ENCODE measurements at regions of chr7 and their contacts with region 1.

Region 1: GRCh38 chr7:93902777-93903423 is 3.5 kb upstream of the GNGT1 start:
- DNase-seq: peak; percentile 51
- H3K4me3 ChIP-seq: no peak overlapping the region
- H3K27ac ChIP-seq: no peak overlapping the region
- H3K4me1 ChIP-seq: no peaks in the 10 kb centered on the region
- H3K27me3 ChIP-seq: no peaks in the 10 kb centered on the region

Region 2: GRCh38 chr7:94087664-94088352 is 184.9 kb after region 1 on chr7:
- in situ Hi-C with region 1: loop called (anchors 10 kb)
- DNase-seq: peak; percentile 83
- H3K4me3 ChIP-seq: peak overlapping the region; percentile 72
- H3K27ac ChIP-seq: no peak overlapping the region
- H3K4me1 ChIP-seq: peaks cover 12% of the 10 kb centered on the region
- H3K27me3 ChIP-seq: no peaks in the 10 kb centered on the region

Region 3: DNA sequence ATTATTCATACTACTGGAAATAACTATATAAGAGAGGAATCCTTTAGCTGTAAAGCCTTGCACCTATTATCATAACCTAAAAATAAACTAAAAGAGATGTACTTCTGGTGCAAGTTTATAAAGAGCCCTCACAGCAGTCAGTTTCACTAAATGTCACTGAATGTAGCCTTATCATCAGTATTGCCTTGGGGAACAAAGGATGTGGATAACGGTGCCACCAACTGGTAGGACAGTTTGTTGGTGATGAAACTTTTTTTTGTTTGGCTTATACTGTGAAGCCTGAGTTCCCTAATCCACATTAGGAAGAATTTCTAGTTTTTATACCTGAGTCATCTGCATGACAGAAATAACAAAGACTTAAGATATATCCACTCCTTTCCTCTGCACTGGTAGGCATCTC is 373.9 kb after region 1 on chr7:
- in situ Hi-C with region 1: loop called (anchors 10 kb)
- DNase-seq: peak; percentile 65
- H3K4me3 ChIP-seq: no peak overlapping the region
- H3K27ac ChIP-seq: no peak overlapping the region
- H3K4me1 ChIP-seq: peaks cover 8% of the 10 kb centered on the region
- H3K27me3 ChIP-seq: no peaks in the 10 kb centered on the region

Region 4: GRCh38 chr7:94540428-94540827 is 637.5 kb after region 1 on chr7:
- in situ Hi-C with region 1: no loop called
- DNase-seq: no peak
- H3K4me3 ChIP-seq: no peak overlapping the region
- H3K27ac ChIP-seq: no peak overlapping the region
- H3K4me1 ChIP-seq: no peaks in the 10 kb centered on the region
- H3K27me3 ChIP-seq: no peaks in the 10 kb centered on the region